ENCODE measurements at regions of chr4 and their contacts with region 1.

Region 1: DNA sequence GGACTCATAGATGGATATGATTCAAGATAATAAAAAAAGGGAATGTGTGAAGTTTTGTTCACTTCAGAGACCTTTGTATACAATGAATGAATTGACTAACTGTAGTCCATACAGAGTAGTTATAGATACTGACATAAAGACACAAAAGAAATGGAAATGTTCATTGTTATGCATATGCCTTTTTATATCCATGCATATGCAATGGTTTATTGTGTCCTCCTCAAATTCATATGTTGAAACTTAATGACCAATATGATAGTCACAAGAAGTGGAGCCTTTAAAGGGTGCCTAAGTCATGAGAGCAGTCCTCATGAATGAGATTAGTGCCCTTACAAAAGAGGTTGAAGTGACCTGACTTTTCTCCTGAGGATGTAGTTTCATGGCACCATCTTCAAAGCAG is 467.5 kb upstream of the NDST4 start:
- DNase-seq: no peak
- ATAC-seq: no peak
- H3K4me3 ChIP-seq: no peak overlapping the region
- H3K27ac ChIP-seq: no peak overlapping the region
- H3K4me1 ChIP-seq: no peaks in the 10 kb centered on the region
- H3K27me3 ChIP-seq: no peaks in the 10 kb centered on the region
- CTCF ChIP-seq: no peak
- EP300 ChIP-seq: no peak
- POLR2A ChIP-seq: no peak
- RAD21 ChIP-seq: no peak

Region 2: GRCh38 chr4:114921790-114922591 is 658.9 kb before region 1 on chr4:
- CTCF ChIA-PET with region 1: no interaction called
- POLR2A ChIA-PET with region 1: no interaction called
- in situ Hi-C with region 1: no loop called
- intact Hi-C with region 1: loop called (anchors 5 kb)
- DNase-seq: no peak
- ATAC-seq: no peak
- H3K4me3 ChIP-seq: no peak overlapping the region
- H3K27ac ChIP-seq: no peak overlapping the region
- H3K4me1 ChIP-seq: no peaks in the 10 kb centered on the region
- H3K27me3 ChIP-seq: no peaks in the 10 kb centered on the region
- CTCF ChIP-seq: no peak
- EP300 ChIP-seq: no peak
- POLR2A ChIP-seq: no peak
- RAD21 ChIP-seq: no peak

Region 3: GRCh38 chr4:115433501-115433900 is 147.4 kb before region 1 on chr4:
- CTCF ChIA-PET with region 1: no interaction called
- POLR2A ChIA-PET with region 1: no interaction called
- in situ Hi-C with region 1: no loop called
- intact Hi-C with region 1: no loop called
- DNase-seq: no peak
- ATAC-seq: no peak
- H3K4me3 ChIP-seq: no peak overlapping the region
- H3K27ac ChIP-seq: no peak overlapping the region
- H3K4me1 ChIP-seq: no peaks in the 10 kb centered on the region
- H3K27me3 ChIP-seq: no peaks in the 10 kb centered on the region
- CTCF ChIP-seq: no peak
- EP300 ChIP-seq: no peak
- POLR2A ChIP-seq: no peak
- RAD21 ChIP-seq: no peak

Region 4: DNA sequence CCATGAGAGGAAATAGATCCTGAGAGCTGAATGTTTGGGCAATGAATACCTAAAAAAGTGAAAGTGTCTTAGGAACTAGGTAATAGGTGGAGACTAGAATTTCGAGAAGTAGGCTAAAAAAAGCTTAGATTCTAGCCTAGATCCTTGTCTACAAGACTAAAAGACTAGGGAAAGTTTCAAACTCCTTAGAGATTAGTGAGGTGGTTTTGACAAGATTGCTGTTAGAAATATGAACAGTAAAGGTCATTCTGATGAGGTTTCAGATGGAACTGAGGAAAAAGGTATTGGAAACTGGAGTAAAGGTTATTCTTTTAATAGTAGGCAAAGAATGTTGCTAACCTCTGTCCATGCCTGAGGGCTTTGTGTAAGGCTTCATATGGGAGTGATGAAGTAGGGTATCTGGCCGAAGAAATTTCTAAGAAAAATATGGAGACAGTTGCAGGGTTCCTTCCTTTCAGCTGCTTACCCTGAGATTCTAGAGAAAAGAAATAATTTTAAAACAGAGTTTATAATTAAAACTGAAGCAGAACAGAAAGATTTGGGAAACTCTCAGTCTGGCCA is 113.6 kb before region 1 on chr4:
- CTCF ChIA-PET with region 1: no interaction called
- POLR2A ChIA-PET with region 1: no interaction called
- in situ Hi-C with region 1: no loop called
- intact Hi-C with region 1: no loop called
- DNase-seq: no peak
- ATAC-seq: no peak
- H3K4me3 ChIP-seq: no peak overlapping the region
- H3K27ac ChIP-seq: no peak overlapping the region
- H3K4me1 ChIP-seq: no peaks in the 10 kb centered on the region
- H3K27me3 ChIP-seq: no peaks in the 10 kb centered on the region
- CTCF ChIP-seq: no peak
- EP300 ChIP-seq: no peak
- POLR2A ChIP-seq: no peak
- RAD21 ChIP-seq: no peak

Region 5: GRCh38 chr4:116752027-116752426 is 1171.1 kb after region 1 on chr4:
- CTCF ChIA-PET with region 1: no interaction called
- POLR2A ChIA-PET with region 1: no interaction called
- in situ Hi-C with region 1: no loop called
- intact Hi-C with region 1: no loop called
- DNase-seq: no peak
- ATAC-seq: no peak
- H3K4me3 ChIP-seq: no peak overlapping the region
- H3K27ac ChIP-seq: no peak overlapping the region
- H3K4me1 ChIP-seq: no peaks in the 10 kb centered on the region
- H3K27me3 ChIP-seq: no peaks in the 10 kb centered on the region
- CTCF ChIP-seq: no peak
- EP300 ChIP-seq: no peak
- POLR2A ChIP-seq: no peak
- RAD21 ChIP-seq: no peak

Measured in K562 (cell line).